ENCODE measurements at regions of chr3 and their contacts with region 1.

Region 1: DNA sequence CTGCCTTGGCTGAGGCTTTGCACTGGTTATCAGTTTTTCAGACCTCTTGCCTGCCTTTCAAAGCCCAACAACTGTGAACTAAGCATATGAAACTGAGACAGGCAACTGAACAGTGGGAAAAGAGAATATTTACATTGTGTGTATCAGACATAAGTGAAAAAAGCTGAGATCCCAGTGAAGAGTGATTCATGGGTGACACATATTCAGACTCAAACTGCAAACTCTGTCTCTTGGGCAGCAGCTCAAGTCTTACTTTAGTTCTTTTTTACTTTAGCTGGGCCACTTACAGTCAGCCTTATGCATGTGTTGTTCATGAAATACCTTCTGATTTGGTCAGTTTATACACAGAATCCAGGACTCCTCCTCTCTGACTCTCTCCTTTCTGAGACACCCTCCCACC is 19.2 kb downstream of the SUCLG2 start:
- DNase-seq: no peak
- ATAC-seq: no peak
- H3K4me3 ChIP-seq: no peak overlapping the region
- H3K4me3 Mint-ChIP-seq: no peak overlapping the region
- H3K27ac ChIP-seq: no peak overlapping the region
- H3K27ac Mint-ChIP-seq: peak overlapping the region; percentile 11
- H3K4me1 ChIP-seq: peaks cover 37% of the 10 kb centered on the region
- H3K4me1 Mint-ChIP-seq: peaks cover 78% of the 10 kb centered on the region
- H3K27me3 ChIP-seq: no peaks in the 10 kb centered on the region
- H3K27me3 Mint-ChIP-seq: no peaks in the 10 kb centered on the region
- CTCF ChIP-seq: no peak

Region 2: DNA sequence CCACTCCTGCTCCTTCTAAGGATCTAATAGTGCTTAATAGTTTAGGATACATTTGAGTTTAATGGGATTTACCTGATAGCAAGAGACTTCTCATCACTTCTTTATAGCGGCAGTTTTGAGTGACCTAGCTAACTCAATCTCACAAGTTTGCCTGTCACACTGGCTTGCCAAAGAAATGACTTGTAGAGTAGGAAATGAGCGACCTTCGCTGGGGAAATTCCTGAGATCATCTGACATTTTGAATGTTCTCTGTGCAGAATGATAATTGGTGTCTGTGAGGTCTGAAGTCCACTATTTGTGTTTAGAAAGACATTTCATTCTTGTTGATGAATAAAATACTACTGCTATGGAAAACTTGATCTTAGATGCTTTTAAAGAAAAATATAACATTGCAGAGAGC is 11.2 kb before region 1 on chr3:
- CTCF ChIA-PET with region 1: interaction called, 3 read pairs
- POLR2A ChIA-PET with region 1: no interaction called
- intact Hi-C with region 1: loop called in 1 of 2 experiments (anchors 2 kb)
- DNase-seq: no peak
- ATAC-seq: no peak
- H3K4me3 ChIP-seq: no peak overlapping the region
- H3K4me3 Mint-ChIP-seq: no peak overlapping the region
- H3K27ac ChIP-seq: no peak overlapping the region
- H3K27ac Mint-ChIP-seq: peak overlapping the region; percentile 45
- H3K4me1 ChIP-seq: peaks cover 4% of the 10 kb centered on the region
- H3K4me1 Mint-ChIP-seq: peaks cover 70% of the 10 kb centered on the region
- H3K27me3 ChIP-seq: no peaks in the 10 kb centered on the region
- H3K27me3 Mint-ChIP-seq: no peaks in the 10 kb centered on the region
- CTCF ChIP-seq: no peak